Mammary epithelial cell (primary cell): ENCODE measurements at regions of chr15 and their contacts with region 1.

Region 1: GRCh38 chr15:84035399-84035766 is 200.2 kb upstream of the GOLGA6L4 start:
- DNase-seq: peak; percentile 46
- H3K4me3 ChIP-seq: no peak overlapping the region
- H3K27ac ChIP-seq: no peak overlapping the region
- H3K4me1 ChIP-seq: no peaks in the 10 kb centered on the region
- H3K27me3 ChIP-seq: no peaks in the 10 kb centered on the region
- CTCF ChIP-seq: peak; percentile 74 to 75

Region 2: GRCh38 chr15:83446904-83447709 is 588.3 kb before region 1 on chr15 and contains the start of gene SH3GL3:
- CTCF ChIA-PET with region 1: no interaction called
- dilution Hi-C with region 1: no loop called
- in situ Hi-C with region 1: loop called (anchors 25 kb)
- intact Hi-C with region 1: no loop called
- DNase-seq: peak; percentile 79
- H3K4me3 ChIP-seq: peak within 1 kb of the TSS; percentile 58 to 65 (median 63)
- H3K27ac ChIP-seq: no peak within 1 kb of the TSS
- H3K4me1 ChIP-seq: peaks cover 9% of the 10 kb centered on the region
- H3K27me3 ChIP-seq: no peaks in the 10 kb centered on the region
- CTCF ChIP-seq: peak; percentile 24 to 62
- total RNA-seq, gene SH3GL3: 0.40 TPM in 1 of 2 donors, not detected in the other

Region 3: DNA sequence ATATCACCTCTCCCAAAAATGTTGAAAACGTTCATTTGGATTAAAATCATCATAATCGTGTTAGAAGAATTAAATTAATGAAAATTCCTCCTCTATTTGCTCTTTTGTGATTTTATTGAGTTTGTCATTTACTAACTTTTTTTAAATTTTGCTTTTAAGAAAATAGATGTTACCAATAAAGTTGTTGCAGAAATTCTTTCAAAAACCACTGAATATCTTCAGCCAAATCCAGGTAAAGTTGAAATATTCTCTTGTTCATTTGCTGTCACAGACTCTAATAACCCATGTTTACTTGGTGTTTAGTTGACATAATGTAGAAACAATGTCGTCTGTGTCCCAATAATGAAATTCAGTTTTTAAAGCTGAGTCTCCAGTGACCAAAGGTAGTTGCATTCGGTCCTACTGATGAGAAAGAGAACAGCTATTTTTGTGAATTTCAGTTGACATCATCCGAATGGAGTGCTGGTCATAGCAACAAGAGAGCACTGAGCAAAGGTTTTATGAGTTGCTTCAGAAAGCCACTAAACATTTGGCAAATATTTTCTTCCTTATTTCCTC is 470.3 kb before region 1 on chr15:
- CTCF ChIA-PET with region 1: no interaction called
- dilution Hi-C with region 1: no loop called
- in situ Hi-C with region 1: loop called in 1 of 2 experiments (anchors 10 kb)
- intact Hi-C with region 1: loop called (anchors 1 kb)
- DNase-seq: no peak
- H3K4me3 ChIP-seq: no peak overlapping the region
- H3K27ac ChIP-seq: no peak overlapping the region
- H3K4me1 ChIP-seq: no peaks in the 10 kb centered on the region
- H3K27me3 ChIP-seq: no peaks in the 10 kb centered on the region
- CTCF ChIP-seq: no peak

Region 4: DNA sequence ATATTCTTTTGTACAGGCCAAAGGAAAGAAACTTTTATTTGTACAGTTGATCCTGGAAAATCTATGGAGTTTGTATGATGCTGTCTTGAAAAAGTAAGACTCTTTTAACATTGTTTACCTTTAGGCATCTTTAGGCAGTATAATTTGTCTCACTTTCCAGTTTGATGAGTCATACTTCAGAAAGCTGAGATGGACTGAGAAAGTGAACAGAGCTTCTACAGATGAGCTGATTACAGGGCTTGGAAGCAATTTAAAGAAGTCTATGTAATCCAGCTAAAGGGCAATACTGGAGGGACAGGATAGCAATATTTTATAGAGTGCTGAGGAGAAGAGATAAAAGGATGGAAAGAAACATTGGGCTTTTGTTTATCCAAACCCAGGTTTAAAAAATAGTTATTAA is 76.6 kb after region 1 on chr15:
- CTCF ChIA-PET with region 1: no interaction called
- dilution Hi-C with region 1: no loop called
- in situ Hi-C with region 1: no loop called
- intact Hi-C with region 1: no loop called
- DNase-seq: peak; percentile 59
- H3K4me3 ChIP-seq: no peak overlapping the region
- H3K27ac ChIP-seq: no peak overlapping the region
- H3K4me1 ChIP-seq: no peaks in the 10 kb centered on the region
- H3K27me3 ChIP-seq: no peaks in the 10 kb centered on the region
- CTCF ChIP-seq: no peak